H1 (cell line): ENCODE measurements at regions of chr9 and their contacts with region 1.

Region 1: GRCh38 chr9:7055201-7055903 is 297.6 kb downstream of the KDM4C start:
- DNase-seq: no peak
- H3K4me3 ChIP-seq: no peak overlapping the region
- H3K27ac ChIP-seq: no peak overlapping the region
- H3K4me1 ChIP-seq: peaks cover 0 to 4% (median 1%) of the 10 kb centered on the region in 4 experiments; a peak in 3 of 7 replicates
- H3K27me3 ChIP-seq: no peaks in the 10 kb centered on the region
- CTCF ChIP-seq: no peak
- EP300 ChIP-seq: no peak
- POLR2A ChIP-seq: no peak
- RAD21 ChIP-seq: no peak

Region 2: DNA sequence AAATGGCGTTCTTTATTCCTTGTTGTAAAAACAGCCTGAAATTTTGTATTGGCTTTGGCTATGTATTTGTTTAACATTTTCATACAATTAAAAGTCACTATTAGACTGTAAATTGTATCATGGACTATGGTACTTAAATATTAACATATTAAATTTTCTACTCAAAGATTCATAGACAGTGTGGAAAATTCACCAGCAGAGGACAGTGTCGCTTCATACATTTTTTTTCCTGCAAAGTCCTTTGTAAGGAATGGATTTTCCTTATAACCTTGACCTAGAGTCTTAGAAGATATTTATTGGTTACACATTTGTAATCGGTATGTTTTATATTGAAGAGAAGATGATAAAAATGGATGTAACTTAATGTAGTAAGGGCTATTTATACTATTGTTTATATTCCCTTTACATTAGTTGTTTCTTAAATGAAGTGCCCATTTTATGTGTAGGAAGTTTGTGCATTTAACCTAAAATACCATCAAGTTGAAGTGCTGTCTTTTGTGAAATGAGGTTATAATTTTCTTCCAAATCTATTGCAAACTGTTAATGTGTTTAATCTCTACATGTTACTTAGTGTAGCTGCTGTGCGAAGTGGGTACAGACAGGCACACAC is 147.5 kb before region 1 on chr9:
- CTCF ChIA-PET with region 1: interaction called, 13 read pairs
- POLR2A ChIA-PET with region 1: no interaction called
- DNase-seq: no peak
- H3K4me3 ChIP-seq: no peak overlapping the region
- H3K27ac ChIP-seq: no peak overlapping the region
- H3K4me1 ChIP-seq: peaks cover 0 to 9% (median 3%) of the 10 kb centered on the region in 4 experiments; a peak in 1 of 7 replicates
- H3K27me3 ChIP-seq: no peaks in the 10 kb centered on the region
- CTCF ChIP-seq: peak in 2 of 3 experiments; percentile 36 to 38; a peak in 2 of 4 replicates
- EP300 ChIP-seq: no peak
- POLR2A ChIP-seq: no peak
- RAD21 ChIP-seq: peak; percentile 58 to 71

Region 3: DNA sequence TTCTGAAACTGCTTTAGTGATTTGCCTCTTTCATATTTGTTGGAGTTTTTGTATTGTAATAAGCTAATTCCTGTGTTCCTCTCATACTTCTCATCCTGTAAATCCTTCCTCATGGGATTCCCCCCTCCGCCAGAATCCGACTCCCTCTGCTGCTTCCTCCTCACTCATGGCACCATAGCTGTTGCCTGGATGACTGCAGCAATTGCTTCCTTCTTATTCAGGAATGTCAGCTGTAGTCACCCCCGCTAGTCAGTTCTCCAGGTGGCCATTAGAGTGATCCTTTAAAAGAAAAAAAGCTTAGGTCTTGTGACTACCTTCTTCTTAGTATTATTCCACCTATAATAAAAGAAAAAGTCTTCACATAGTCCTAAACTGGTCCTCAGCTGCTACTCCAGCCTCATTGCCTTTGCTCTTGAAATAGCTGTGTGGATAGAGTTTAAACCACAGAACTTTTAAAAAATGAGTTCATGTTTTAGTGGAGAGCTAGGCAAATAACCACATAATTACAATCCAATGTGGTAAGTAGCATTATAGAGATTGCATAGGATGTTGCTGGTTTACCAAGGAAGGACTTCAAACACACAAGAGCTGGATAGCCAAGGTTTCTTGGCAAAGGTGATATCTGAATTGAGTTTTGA is 70.3 kb before region 1 on chr9:
- CTCF ChIA-PET with region 1: no interaction called
- POLR2A ChIA-PET with region 1: no interaction called
- DNase-seq: peak in 1 of 2 experiments; percentile 43
- H3K4me3 ChIP-seq: no peak overlapping the region
- H3K27ac ChIP-seq: no peak overlapping the region
- H3K4me1 ChIP-seq: peaks cover 0 to 2% (median 1%) of the 10 kb centered on the region in 4 experiments; a peak in 2 of 7 replicates
- H3K27me3 ChIP-seq: no peaks in the 10 kb centered on the region
- CTCF ChIP-seq: no peak
- EP300 ChIP-seq: 0 out of 3 replicates have a peak, but pooled peaks of 1 of the 2 experiments have one; percentile 20
- POLR2A ChIP-seq: no peak
- RAD21 ChIP-seq: no peak; a peak in 1 of 4 replicates

Region 4: DNA sequence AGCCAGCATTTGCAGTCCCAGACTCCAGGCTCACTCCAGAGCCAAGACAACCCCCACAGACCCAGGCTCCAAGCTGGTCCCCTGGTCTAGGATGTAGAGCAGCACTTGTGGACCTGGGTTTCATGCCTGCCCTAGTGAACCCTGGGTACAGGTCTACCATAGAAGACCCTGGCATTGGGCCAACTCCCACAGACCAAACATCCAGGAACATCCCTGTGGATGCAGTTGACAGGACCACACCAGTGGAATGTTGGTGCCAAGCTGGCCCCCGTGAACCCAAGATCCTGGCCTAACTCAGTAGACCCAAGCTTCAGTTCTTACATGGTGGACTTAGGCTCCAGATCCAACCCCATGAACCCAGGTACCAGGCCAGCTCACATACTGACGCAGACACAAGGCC is 46.9 kb before region 1 on chr9:
- CTCF ChIA-PET with region 1: no interaction called
- POLR2A ChIA-PET with region 1: no interaction called
- DNase-seq: no peak
- H3K4me3 ChIP-seq: no peak overlapping the region
- H3K27ac ChIP-seq: no peak overlapping the region
- H3K4me1 ChIP-seq: no peaks in the 10 kb centered on the region; a peak in 1 of 7 replicates
- H3K27me3 ChIP-seq: no peaks in the 10 kb centered on the region
- CTCF ChIP-seq: no peak
- EP300 ChIP-seq: no peak
- POLR2A ChIP-seq: no peak
- RAD21 ChIP-seq: no peak

Region 5: GRCh38 chr9:7073706-7074105 is 18.4 kb after region 1 on chr9:
- CTCF ChIA-PET with region 1: interaction called, 11 read pairs
- POLR2A ChIA-PET with region 1: interaction called, 3 read pairs
- DNase-seq: no peak
- H3K4me3 ChIP-seq: no peak overlapping the region
- H3K27ac ChIP-seq: no peak overlapping the region
- H3K4me1 ChIP-seq: no peaks in the 10 kb centered on the region
- H3K27me3 ChIP-seq: no peaks in the 10 kb centered on the region
- CTCF ChIP-seq: no peak
- EP300 ChIP-seq: no peak
- POLR2A ChIP-seq: no peak
- RAD21 ChIP-seq: no peak

Region 6: GRCh38 chr9:7223981-7224380 is 168.6 kb after region 1 on chr9:
- CTCF ChIA-PET with region 1: no interaction called
- POLR2A ChIA-PET with region 1: no interaction called
- DNase-seq: no peak
- H3K4me3 ChIP-seq: no peak overlapping the region
- H3K27ac ChIP-seq: no peak overlapping the region
- H3K4me1 ChIP-seq: no peaks in the 10 kb centered on the region; a peak in 1 of 7 replicates
- H3K27me3 ChIP-seq: no peaks in the 10 kb centered on the region
- CTCF ChIP-seq: no peak
- EP300 ChIP-seq: no peak
- POLR2A ChIP-seq: no peak
- RAD21 ChIP-seq: no peak

Region 7: DNA sequence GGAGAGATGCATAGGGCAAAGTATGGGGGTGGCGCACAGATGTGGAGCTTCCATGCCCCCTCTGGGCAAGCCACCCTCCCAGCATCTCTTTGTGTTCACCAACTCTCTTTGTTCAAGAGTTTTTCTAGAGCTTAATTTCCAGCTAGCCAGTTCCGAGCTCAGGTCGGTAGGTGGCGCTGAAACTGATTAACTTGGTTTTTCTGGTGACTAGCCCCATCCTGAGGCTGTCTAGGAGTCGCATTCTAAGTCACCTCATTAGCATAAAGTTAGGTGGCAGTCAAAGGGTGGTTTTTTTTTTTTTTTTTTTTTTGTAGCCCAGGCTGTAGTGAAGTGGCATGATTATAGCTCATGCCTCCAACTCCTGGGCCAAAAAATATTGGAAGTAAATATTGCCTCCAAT is 178.8 kb after region 1 on chr9:
- CTCF ChIA-PET with region 1: interaction called, 22 read pairs
- POLR2A ChIA-PET with region 1: no interaction called
- DNase-seq: peak; percentile 57 to 91
- H3K4me3 ChIP-seq: no peak overlapping the region
- H3K27ac ChIP-seq: no peak overlapping the region
- H3K4me1 ChIP-seq: peaks cover 0 to 4% (median 0%) of the 10 kb centered on the region in 4 experiments; a peak in 4 of 7 replicates
- H3K27me3 ChIP-seq: no peaks in the 10 kb centered on the region
- CTCF ChIP-seq: peak; percentile 52 to 99 (median 91)
- EP300 ChIP-seq: no peak
- POLR2A ChIP-seq: no peak
- RAD21 ChIP-seq: peak; percentile 72 to 81

Region 8: GRCh38 chr9:7358876-7359275 is 303.5 kb after region 1 on chr9:
- CTCF ChIA-PET with region 1: interaction called, 23 read pairs
- POLR2A ChIA-PET with region 1: no interaction called
- DNase-seq: no peak
- H3K4me3 ChIP-seq: no peak overlapping the region
- H3K27ac ChIP-seq: no peak overlapping the region
- H3K4me1 ChIP-seq: 0 out of 7 replicates have a peak, but pooled peaks cover 0 to 1% (median 0%) of the 10 kb centered on the region in 4 experiments
- H3K27me3 ChIP-seq: no peaks in the 10 kb centered on the region
- CTCF ChIP-seq: peak; percentile 33 to 54 (median 51)
- EP300 ChIP-seq: no peak
- POLR2A ChIP-seq: no peak
- RAD21 ChIP-seq: peak; percentile 39 to 49